ENCODE measurements at regions of chr7 and their contacts with region 1.

Region 1: GRCh38 chr7:36207451-36208291 is 54.6 kb downstream of the EEPD1 start:
- DNase-seq: peak; percentile 51 to 100
- H3K4me3 ChIP-seq: no peak overlapping the region
- H3K27ac ChIP-seq: peak overlapping the region; percentile 75
- H3K4me1 ChIP-seq: peaks cover 38% of the 10 kb centered on the region
- H3K27me3 ChIP-seq: no peaks in the 10 kb centered on the region
- CTCF ChIP-seq: peak; percentile 46; the same call in 1 of the 2 replicates

Region 2: DNA sequence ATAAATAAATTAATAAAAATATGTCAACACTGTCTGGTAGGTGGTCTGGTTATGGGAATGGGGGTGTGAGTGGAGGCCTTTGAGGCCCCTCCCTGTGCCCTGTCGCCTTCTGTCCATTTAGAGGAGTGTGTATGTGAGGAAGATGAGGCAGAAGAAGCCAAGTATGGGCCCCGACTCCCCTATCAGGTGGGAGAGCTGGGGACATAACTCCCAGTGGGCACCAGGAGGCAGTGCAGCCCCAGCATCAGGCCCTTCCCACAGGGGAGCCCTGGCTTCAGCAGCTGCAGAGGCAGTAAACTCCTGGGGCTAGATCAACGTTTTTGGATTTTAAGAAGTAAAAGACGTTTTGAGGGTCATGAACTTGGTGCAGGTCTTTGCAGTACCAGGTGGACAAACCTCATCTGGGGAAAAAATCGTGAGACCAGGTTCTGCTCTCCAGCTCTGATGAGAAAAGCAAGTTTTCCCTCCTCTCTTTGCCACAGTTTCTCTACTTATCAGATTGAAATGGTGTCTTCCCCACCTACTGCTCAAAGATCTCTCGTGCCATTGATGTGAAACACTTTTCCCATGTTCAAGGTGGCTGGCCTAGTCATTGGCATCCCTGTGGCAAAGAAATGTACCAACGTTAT is 222.4 kb before region 1 on chr7:
- CTCF ChIA-PET with region 1: no interaction called
- POLR2A ChIA-PET with region 1: no interaction called
- intact Hi-C with region 1: loop called (anchors 5 kb)
- DNase-seq: peak; percentile 57 to 84
- H3K4me3 ChIP-seq: no peak overlapping the region
- H3K27ac ChIP-seq: no peak overlapping the region
- H3K4me1 ChIP-seq: peaks cover 18% of the 10 kb centered on the region
- H3K27me3 ChIP-seq: no peaks in the 10 kb centered on the region
- CTCF ChIP-seq: peak; percentile 99

Region 3: DNA sequence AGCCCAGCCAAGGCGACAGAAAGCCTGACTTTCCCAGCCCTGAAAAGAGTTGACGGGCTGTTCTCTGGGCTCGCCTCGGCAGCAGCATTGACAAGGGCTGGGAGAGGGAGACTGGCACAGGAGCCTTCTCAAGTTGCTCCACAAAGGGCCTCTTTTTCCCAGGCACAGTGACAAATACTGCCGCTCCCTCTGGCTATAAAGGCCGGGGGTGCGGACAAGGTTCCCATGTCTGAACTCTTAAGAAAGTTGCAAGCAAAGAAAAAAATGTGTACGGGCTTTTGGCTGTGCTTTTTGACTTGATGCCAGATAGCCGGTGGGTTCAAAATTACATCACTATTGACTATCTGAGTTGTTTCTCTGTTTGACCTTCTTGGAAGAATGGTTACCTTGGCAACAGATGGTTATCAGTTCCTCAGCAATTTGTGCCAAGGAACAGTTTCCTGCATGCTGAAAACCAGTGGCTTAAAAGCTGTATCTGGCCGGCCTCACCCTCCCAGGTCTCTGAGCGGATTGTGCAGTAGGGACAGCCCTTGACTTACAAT is 170.5 kb before region 1 on chr7:
- CTCF ChIA-PET with region 1: no interaction called
- POLR2A ChIA-PET with region 1: no interaction called
- intact Hi-C with region 1: loop called (anchors 5 kb)
- DNase-seq: peak; percentile 94 to 100
- H3K4me3 ChIP-seq: peak overlapping the region; percentile 20; the same call in 1 of the 2 replicates
- H3K27ac ChIP-seq: peak overlapping the region; percentile 87
- H3K4me1 ChIP-seq: peaks cover 75% of the 10 kb centered on the region
- H3K27me3 ChIP-seq: no peaks in the 10 kb centered on the region
- CTCF ChIP-seq: no peak

Region 4: GRCh38 chr7:36115448-36116321 is 92.0 kb before region 1 on chr7:
- CTCF ChIA-PET with region 1: interaction called, 20 read pairs
- POLR2A ChIA-PET with region 1: no interaction called
- intact Hi-C with region 1: no loop called
- DNase-seq: peak; percentile 93 to 97
- H3K4me3 ChIP-seq: peak overlapping the region; percentile 2; the same call in 1 of the 2 replicates
- H3K27ac ChIP-seq: peak overlapping the region; percentile 86
- H3K4me1 ChIP-seq: peaks cover 67% of the 10 kb centered on the region
- H3K27me3 ChIP-seq: no peaks in the 10 kb centered on the region
- CTCF ChIP-seq: no peak

Region 5: DNA sequence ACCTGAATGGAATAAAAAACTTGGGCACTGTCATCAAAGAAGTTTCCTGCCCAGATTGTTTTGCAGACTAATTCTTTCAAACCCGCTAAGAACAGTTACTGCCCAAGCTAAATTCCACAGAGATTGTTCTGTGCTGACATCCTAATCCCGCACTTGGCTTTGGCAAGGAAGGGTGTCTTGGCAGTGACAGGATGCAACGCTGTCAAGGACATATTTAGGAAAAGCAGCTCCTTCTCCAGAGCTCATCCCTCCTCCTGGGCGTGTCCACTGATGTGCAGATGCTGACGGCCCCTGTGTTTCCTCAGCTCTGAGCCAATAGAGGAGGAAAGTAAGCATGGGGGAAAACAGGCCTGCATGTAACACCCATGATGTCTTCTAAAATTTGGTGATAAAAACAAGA is 19.6 kb after region 1 on chr7:
- CTCF ChIA-PET with region 1: interaction called, 12 read pairs
- POLR2A ChIA-PET with region 1: no interaction called
- intact Hi-C with region 1: no loop called
- DNase-seq: no peak
- H3K4me3 ChIP-seq: no peak overlapping the region
- H3K27ac ChIP-seq: no peak overlapping the region
- H3K4me1 ChIP-seq: peaks cover 2% of the 10 kb centered on the region
- H3K27me3 ChIP-seq: no peaks in the 10 kb centered on the region
- CTCF ChIP-seq: no peak

Region 6: DNA sequence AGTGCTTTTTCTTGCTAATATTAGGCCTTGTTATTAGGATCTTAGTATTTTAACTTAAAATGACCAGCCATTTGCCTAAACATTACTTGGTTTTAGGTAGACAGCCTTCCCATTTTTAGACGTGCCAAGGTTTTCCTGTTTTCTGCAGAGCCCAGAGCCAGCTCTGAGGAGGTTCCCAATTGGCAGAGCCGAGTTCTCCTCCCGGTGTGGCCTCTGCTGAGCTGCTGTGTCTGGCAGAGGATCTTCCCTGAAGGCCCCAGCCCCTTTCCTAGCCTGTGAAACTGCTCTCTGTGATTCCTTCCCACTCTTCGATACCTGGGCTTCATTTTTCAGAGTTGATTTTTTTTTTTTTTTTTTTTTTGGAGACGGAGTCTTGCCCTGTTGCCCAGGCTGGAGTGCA is 36.8 kb after region 1 on chr7:
- CTCF ChIA-PET with region 1: no interaction called
- POLR2A ChIA-PET with region 1: no interaction called
- intact Hi-C with region 1: no loop called
- DNase-seq: no peak
- H3K4me3 ChIP-seq: no peak overlapping the region
- H3K27ac ChIP-seq: no peak overlapping the region
- H3K4me1 ChIP-seq: no peaks in the 10 kb centered on the region
- H3K27me3 ChIP-seq: no peaks in the 10 kb centered on the region
- CTCF ChIP-seq: no peak

Region 7: DNA sequence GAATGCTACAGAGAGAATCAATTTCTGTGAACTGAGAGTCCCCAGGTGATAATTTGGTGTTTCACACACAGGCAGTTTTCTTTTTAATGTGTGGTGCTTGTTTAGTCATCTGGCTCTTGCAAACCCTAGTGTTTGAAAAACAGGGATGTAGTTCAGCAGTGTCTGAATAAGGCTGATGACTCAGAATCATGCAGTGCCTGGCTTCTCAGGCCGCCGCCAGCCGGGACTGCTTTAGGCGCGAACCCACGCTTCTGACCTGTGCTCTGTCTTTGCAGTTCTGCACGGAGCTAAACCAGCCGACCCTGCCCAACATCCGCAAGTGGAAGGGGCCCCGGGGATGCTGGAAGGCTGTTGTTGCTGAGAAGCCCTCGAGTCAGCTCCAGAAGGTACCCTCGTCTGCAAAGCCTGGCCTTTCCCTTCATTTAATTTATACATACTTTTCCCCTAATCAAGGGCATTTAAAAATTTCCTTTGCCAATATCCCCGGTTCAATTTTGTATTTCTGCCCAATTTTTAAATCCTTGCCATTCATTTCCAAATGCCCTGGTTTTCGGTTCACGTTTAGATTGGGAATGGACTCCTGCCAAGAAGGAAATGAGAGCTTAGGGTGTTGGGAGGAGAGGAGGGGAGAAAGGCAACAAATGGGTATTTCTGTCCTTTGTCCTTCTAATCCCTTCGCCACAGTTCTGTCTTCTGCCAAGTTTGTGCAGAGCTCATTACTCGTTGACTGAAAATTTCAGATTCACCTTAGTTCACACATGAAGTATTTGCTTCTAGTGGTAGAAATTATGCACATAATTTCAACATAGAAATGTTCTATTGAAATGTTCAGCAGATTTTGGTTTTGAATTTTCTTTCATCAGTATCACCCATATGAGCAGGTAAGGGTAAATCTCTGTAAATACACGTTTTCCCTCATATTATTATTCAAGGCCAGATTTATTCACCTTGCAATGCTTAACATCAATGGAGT is 73.5 kb after region 1 on chr7:
- CTCF ChIA-PET with region 1: no interaction called
- POLR2A ChIA-PET with region 1: no interaction called
- intact Hi-C with region 1: loop called (anchors 2 kb)
- DNase-seq: peak; percentile 68 to 92
- H3K4me3 ChIP-seq: peak overlapping the region; percentile 50
- H3K27ac ChIP-seq: peak overlapping the region; percentile 67
- H3K4me1 ChIP-seq: peaks cover 73% of the 10 kb centered on the region
- H3K27me3 ChIP-seq: no peaks in the 10 kb centered on the region
- CTCF ChIP-seq: no peak

Measured in PC-9 (cell line).